Activated CD4-positive, alpha-beta T cell treated with anti-CD3 and anti-CD28 coated beads for 36 hours (primary cell): ENCODE measurements at regions of chr5 and their contacts with region 1.

Region 1: GRCh38 chr5:32355686-32356085 is 42.9 kb upstream of the MTMR12 start:
- DNase-seq: no peak
- ATAC-seq: no peak
- H3K4me3 Mint-ChIP-seq: no peak overlapping the region
- H3K27ac Mint-ChIP-seq: no peak overlapping the region
- H3K4me1 Mint-ChIP-seq: peaks cover 5% of the 10 kb centered on the region
- H3K27me3 Mint-ChIP-seq: no peaks in the 10 kb centered on the region

Region 2: GRCh38 chr5:32613050-32613672 is 257.5 kb after region 1 on chr5:
- CTCF ChIA-PET with region 1: no interaction called
- POLR2A ChIA-PET with region 1: no interaction called
- intact Hi-C with region 1: loop called in 1 of 2 experiments (anchors 10 kb)
- DNase-seq: peak; percentile 91
- ATAC-seq: peak; percentile 93
- H3K4me3 Mint-ChIP-seq: no peak overlapping the region
- H3K27ac Mint-ChIP-seq: peak overlapping the region; percentile 67
- H3K4me1 Mint-ChIP-seq: peaks cover 4% of the 10 kb centered on the region
- H3K27me3 Mint-ChIP-seq: no peaks in the 10 kb centered on the region